Activated naive CD4-positive, alpha-beta T cell treated with anti-CD3 and anti-CD28 coated beads, Interleukin-2, amount 10 ng/mL, durations not matched to agents 7 days and 5 days (primary cell): ENCODE measurements at regions of chr9 and their contacts with region 1.

Region 1: DNA sequence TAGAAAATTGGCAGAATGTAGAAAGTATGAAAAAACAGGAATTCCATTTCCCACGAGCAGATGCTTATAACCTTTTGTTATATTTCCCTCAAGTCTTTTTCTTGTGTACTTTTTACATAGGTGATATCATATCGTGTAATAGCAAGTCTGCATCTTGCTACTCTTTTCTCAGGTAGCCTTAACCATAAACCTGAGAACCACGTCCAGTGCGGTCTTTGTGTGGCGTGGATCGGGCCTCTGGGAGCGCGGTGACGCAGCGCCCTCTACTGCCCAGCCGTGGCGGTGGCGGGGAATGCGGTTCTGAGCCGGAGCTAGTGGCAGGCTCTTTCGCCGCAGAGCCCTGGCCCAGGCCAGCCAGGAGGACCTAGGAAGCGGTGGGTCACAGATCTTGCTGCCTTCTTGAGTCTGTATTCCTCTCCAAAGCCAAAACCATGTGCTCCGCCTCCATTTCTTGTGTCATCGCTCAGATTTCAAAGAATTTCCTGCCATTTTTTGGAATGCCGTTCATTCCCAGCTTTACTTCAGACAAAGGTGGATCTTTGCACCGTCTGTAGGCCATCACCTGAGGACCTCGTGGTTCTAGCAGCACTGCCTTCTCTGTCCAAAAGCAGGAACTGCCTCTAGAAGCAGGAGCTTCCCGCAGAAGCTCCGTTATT is 71.9 kb downstream of the MVB12B start:
- DNase-seq: peak; percentile 77
- H3K4me3 Mint-ChIP-seq: peak overlapping the region; percentile 7
- H3K27ac Mint-ChIP-seq: peak overlapping the region; percentile 46
- H3K4me1 Mint-ChIP-seq: peaks cover 59% of the 10 kb centered on the region
- H3K27me3 Mint-ChIP-seq: peaks cover 55% of the 10 kb centered on the region

Region 2: DNA sequence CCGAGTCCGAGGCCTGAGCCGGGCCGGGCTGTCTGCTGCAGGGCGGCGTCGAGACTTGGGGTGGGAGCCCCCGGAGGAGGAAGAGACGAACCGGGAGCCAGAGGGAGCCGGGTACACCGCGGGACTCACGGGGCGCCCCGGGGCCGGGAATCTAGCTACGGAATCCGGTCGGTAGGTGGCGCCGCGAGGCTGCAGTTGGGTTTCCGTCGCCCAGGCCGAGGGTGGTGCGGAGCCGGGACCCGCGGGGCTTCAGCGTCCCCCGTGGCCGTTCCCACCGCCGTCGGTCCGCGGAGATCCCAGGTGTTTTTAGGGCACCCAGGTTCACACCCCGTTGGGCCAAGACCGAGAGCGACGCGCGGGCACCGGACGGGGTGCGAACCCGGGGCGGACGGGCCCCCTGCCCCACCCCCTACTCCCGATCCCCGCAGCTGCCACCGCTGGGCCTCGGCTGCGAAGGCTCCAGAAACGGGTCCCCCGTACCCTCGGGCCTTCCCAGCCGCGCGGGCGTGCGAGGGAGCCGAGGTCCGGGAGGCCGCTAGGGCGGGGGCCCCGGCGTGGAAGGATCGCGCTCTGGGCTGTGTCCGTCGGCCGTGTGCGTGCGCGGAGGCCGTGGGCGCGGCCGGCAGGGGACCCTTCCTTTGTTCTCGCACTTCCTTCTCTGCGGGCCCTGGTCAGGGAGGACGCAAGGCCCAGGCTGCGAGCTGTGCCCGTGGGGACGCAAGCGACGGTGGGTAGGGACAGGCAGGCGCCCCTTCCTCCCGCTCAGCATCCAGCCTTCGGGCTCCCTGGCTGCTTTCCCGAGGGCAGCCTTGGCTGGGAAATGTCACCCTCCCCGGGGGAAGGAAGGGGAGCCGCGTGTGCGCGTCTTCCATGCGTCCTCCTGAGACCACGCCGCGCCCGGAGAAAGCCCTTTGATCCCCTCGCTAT is 990.3 kb before region 1 on chr9:
- CTCF ChIA-PET with region 1: interaction called, 10 read pairs
- DNase-seq: peak; percentile 82
- H3K4me3 Mint-ChIP-seq: peak overlapping the region; percentile 61
- H3K27ac Mint-ChIP-seq: no peak overlapping the region
- H3K4me1 Mint-ChIP-seq: peaks cover 15% of the 10 kb centered on the region
- H3K27me3 Mint-ChIP-seq: peaks cover 58% of the 10 kb centered on the region

Region 3: GRCh38 chr9:126283799-126284465 is 114.6 kb before region 1 on chr9:
- CTCF ChIA-PET with region 1: no interaction called
- DNase-seq: no peak
- H3K4me3 Mint-ChIP-seq: no peak overlapping the region
- H3K27ac Mint-ChIP-seq: no peak overlapping the region
- H3K4me1 Mint-ChIP-seq: no peaks in the 10 kb centered on the region
- H3K27me3 Mint-ChIP-seq: peaks cover 14% of the 10 kb centered on the region

Region 4: DNA sequence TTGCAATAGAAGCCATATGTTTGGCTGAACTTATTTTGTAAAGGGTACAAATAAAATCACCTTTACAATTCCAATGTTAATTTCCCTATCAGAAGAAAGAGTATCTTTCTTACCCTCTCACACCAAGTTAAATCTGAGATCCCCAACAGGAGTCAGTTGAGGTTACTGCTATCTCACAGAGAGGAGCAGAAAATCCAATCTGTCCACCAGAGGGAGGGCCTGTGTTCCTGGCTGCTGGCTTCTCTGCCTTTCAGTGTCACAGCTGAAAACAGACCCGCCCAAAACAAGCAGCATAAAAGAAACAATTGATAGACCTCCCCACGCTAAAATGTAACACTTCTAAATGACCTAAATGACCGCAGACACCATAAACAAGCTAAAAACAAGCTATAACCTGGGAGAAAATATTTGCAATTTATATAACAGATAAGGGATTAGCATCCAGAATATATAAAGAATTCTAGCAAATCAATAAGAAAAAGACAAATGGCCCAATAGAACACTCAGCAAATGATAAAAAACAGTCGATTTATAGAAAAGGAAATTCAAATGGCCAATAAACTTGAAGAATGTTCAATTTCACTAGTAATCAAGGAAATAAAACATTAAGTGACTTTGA is 96.4 kb before region 1 on chr9:
- CTCF ChIA-PET with region 1: interaction called, 50 read pairs
- DNase-seq: peak; percentile 76
- H3K4me3 Mint-ChIP-seq: no peak overlapping the region
- H3K27ac Mint-ChIP-seq: no peak overlapping the region
- H3K4me1 Mint-ChIP-seq: peaks cover 2% of the 10 kb centered on the region
- H3K27me3 Mint-ChIP-seq: peaks cover 29% of the 10 kb centered on the region

Region 5: GRCh38 chr9:126317513-126317912 is 81.0 kb before region 1 on chr9:
- CTCF ChIA-PET with region 1: interaction called, 24 read pairs
- DNase-seq: peak; percentile 54
- H3K4me3 Mint-ChIP-seq: no peak overlapping the region
- H3K27ac Mint-ChIP-seq: no peak overlapping the region
- H3K4me1 Mint-ChIP-seq: no peaks in the 10 kb centered on the region
- H3K27me3 Mint-ChIP-seq: peaks cover 39% of the 10 kb centered on the region

Region 6: DNA sequence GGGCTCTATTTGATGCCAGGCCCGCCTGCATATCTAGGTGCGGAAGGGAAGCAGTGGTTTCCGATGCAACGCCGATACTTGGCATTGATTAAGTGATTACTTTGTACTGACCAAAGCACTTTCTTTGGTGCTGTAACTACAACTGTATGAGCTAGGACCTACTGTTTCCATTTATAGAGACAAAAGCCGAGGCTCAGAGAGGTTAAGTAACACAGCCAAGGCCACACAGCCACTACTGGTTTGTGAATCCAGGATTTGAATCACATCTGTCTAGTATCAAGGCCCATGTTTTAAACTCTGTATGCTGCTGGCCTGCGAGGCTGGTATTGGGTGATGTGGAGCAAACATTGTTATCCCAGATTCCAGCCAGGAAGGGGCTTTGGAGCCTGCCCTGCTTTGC is 30.5 kb before region 1 on chr9:
- CTCF ChIA-PET with region 1: no interaction called
- DNase-seq: no peak
- H3K4me3 Mint-ChIP-seq: no peak overlapping the region
- H3K27ac Mint-ChIP-seq: no peak overlapping the region
- H3K4me1 Mint-ChIP-seq: no peaks in the 10 kb centered on the region
- H3K27me3 Mint-ChIP-seq: peaks cover 13% of the 10 kb centered on the region

Region 7: GRCh38 chr9:126420643-126421577 is 22.4 kb after region 1 on chr9:
- CTCF ChIA-PET with region 1: interaction called, 12 read pairs
- DNase-seq: no peak
- H3K4me3 Mint-ChIP-seq: no peak overlapping the region
- H3K27ac Mint-ChIP-seq: no peak overlapping the region
- H3K4me1 Mint-ChIP-seq: peaks cover 20% of the 10 kb centered on the region
- H3K27me3 Mint-ChIP-seq: peaks cover 19% of the 10 kb centered on the region

Region 8: DNA sequence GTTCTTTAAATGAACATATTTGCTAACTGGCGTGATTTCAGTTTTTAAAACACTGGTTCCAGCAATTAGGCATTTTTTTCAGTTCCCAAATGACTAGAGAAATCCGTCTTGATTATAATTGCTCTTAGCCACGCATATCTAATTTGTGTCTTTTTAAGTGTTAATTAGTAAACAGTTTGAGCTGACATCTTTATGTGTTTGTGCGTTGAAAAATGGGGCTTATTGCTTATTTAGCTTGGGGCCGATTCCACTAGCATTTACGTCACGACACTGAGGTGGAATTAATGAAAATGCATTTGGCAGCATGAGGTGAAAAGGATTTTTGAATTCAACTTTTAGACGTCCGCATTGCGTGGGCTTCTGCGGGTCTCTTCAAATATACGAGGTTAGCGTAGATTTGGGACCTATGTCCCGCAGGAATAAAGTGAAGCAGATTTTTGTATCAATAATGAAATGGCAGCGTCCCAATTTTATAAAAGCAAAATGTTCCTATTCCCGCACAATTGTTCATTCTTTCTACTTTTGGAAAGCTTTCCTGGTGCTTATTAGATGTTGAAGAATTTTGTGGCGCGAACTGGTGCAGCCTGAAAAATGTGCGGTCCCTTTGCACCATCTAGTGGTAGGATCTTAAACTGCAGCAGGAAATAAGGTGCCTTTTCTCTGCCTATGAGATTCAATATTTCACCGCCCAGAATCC is 92.5 kb after region 1 on chr9:
- CTCF ChIA-PET with region 1: interaction called, 49 read pairs
- DNase-seq: peak; percentile 66
- H3K4me3 Mint-ChIP-seq: no peak overlapping the region
- H3K27ac Mint-ChIP-seq: no peak overlapping the region
- H3K4me1 Mint-ChIP-seq: peaks cover 13% of the 10 kb centered on the region
- H3K27me3 Mint-ChIP-seq: peaks cover 59% of the 10 kb centered on the region